ENCODE measurements at regions of chr2 and their contacts with region 1.

Region 1: DNA sequence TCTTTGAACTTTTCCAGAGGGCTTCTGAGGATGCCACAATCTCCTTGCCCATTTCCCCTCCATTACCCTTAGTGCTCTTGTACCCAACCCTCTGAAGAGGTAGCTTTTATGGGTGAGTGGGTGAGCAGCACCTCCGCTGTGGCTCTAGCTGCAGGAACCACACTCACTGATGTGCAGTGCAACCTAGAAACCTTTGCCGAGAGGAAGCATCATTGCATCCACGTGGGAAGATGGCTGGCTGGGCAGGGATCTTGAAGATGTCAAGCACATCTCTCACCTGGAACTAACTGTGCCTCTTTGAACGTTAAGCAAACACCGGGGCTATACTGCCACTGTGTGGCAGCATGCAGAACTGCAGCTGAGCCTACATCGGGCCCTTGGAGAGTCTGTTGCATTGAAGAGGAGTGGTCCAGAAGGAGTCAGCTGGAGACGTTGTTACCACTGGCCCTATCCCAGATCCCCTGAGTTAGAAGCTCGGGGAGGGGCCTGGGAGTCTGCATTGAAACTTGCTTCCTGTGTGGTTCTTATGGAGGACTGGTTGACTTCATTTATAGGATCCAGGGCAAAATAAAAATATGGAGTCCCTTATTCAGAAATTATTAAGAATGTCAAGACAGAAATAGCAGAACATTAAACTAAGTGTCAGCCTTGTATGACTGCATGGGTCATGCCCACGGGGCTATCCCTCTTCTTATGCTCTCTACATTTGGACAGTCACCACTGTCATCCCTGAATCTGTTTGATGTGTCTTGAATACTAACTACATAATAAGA is 28.7 kb downstream of the IGFBP5 start:
- DNase-seq: peak; percentile 70
- H3K4me3 ChIP-seq: no peak overlapping the region
- H3K27ac ChIP-seq: no peak overlapping the region
- H3K4me1 ChIP-seq: peaks cover 8 to 16% (median 12%) of the 10 kb centered on the region in 4 donors
- H3K27me3 ChIP-seq: no peaks in the 10 kb centered on the region
- CTCF ChIP-seq: peak; percentile 96 to 99 (median 97)
- EP300 ChIP-seq: no peak
- POLR2A ChIP-seq: no peak

Region 2: GRCh38 chr2:216034065-216034464 is 632.6 kb before region 1 on chr2:
- in situ Hi-C with region 1: loop called in 1 of 4 experiments (anchors 25 kb)
- intact Hi-C with region 1: no loop called
- DNase-seq: peak; percentile 78
- H3K4me3 ChIP-seq: no peak overlapping the region
- H3K27ac ChIP-seq: no peak overlapping the region
- H3K4me1 ChIP-seq: no peaks in the 10 kb centered on the region
- H3K27me3 ChIP-seq: no peaks in the 10 kb centered on the region
- CTCF ChIP-seq: peak; percentile 77 to 95 (median 92)
- EP300 ChIP-seq: no peak
- POLR2A ChIP-seq: no peak

Region 3: GRCh38 chr2:216519154-216519762 is 147.4 kb before region 1 on chr2:
- in situ Hi-C with region 1: loop called (anchors 5 kb)
- intact Hi-C with region 1: loop called (anchors 2 kb)
- DNase-seq: peak; percentile 72
- H3K4me3 ChIP-seq: no peak overlapping the region
- H3K27ac ChIP-seq: no peak overlapping the region
- H3K4me1 ChIP-seq: no peaks in the 10 kb centered on the region
- H3K27me3 ChIP-seq: no peaks in the 10 kb centered on the region
- CTCF ChIP-seq: peak; percentile 73 to 88 (median 74)
- EP300 ChIP-seq: no peak
- POLR2A ChIP-seq: no peak

Region 4: GRCh38 chr2:216829533-216829932 is 162.9 kb after region 1 on chr2:
- in situ Hi-C with region 1: no loop called
- intact Hi-C with region 1: no loop called
- DNase-seq: peak; percentile 55
- H3K4me3 ChIP-seq: no peak overlapping the region
- H3K27ac ChIP-seq: no peak overlapping the region
- H3K4me1 ChIP-seq: peaks cover 0 to 12% (median 8%) of the 10 kb centered on the region in 4 donors
- H3K27me3 ChIP-seq: no peaks in the 10 kb centered on the region
- CTCF ChIP-seq: no peak
- EP300 ChIP-seq: no peak
- POLR2A ChIP-seq: no peak